Spleen (tissue), 13 donors: ENCODE measurements at regions of chr15 and their contacts with region 1.

Region 1: GRCh38 chr15:78108299-78109084 is 16.1 kb downstream of the SH2D7 start:
- DNase-seq: peak; percentile 96
- H3K4me3 ChIP-seq: no peak overlapping the region
- H3K27ac ChIP-seq: peak overlapping the region in 1 of 8 donors; percentile 30
- H3K4me1 ChIP-seq: peaks cover 13 to 48% (median 35%) of the 10 kb centered on the region in 6 donors
- H3K27me3 ChIP-seq: no peaks in the 10 kb centered on the region
- CTCF ChIP-seq: peak; percentile 94 to 99 (median 97)
- POLR2A ChIP-seq: no peak

Region 2: DNA sequence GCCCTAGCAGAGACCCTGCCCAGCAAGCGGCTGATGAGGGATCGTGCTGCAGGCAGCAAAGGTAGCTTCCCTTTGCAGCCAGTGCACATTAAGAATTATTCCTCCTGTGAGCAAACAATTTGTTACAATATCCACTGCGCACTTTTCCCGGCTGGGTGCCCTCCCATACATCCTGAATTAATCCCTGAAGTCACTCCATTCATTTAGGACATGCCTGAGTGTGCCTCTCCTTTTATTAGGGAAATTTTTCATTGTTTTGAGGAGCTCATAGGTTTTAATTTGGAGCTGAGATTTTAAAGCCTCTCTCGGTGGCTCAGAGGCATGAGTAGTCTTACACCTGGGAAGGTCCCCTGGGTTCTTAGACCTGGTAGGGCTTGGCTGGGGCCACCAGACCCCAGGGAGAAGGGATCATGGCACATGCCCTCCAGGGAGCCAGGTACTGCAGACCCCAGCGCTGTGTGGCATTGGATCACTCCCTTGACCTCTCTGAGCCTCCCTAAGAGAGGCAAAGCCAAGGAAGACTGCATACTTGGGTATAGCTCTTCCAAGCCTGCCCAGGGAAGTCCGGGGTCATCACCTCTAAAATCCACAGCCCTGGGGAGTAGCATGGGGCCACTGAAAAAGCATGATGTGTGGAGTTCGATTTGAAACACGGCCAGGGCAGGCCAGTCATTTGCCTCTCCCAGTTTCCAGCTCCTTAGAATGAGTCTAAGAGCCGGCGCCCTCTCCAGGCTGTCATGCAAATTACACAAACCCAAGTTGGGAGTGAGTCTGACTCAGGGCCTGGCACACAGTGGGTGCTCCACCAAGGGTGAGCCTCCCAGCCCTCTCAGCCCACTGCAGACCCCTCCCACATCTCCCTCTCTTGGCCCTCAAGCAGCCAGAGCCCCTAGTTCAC is 323.8 kb before region 1 on chr15:
- intact Hi-C with region 1: no loop called
- DNase-seq: no peak
- H3K4me3 ChIP-seq: no peak overlapping the region
- H3K27ac ChIP-seq: no peak overlapping the region
- H3K4me1 ChIP-seq: no peaks in the 10 kb centered on the region
- H3K27me3 ChIP-seq: peaks cover 0 to 36% (median 0%) of the 10 kb centered on the region in 7 donors
- CTCF ChIP-seq: peak in 4 of 11 experiments; percentile 17 to 33 (median 25)
- POLR2A ChIP-seq: no peak

Region 3: DNA sequence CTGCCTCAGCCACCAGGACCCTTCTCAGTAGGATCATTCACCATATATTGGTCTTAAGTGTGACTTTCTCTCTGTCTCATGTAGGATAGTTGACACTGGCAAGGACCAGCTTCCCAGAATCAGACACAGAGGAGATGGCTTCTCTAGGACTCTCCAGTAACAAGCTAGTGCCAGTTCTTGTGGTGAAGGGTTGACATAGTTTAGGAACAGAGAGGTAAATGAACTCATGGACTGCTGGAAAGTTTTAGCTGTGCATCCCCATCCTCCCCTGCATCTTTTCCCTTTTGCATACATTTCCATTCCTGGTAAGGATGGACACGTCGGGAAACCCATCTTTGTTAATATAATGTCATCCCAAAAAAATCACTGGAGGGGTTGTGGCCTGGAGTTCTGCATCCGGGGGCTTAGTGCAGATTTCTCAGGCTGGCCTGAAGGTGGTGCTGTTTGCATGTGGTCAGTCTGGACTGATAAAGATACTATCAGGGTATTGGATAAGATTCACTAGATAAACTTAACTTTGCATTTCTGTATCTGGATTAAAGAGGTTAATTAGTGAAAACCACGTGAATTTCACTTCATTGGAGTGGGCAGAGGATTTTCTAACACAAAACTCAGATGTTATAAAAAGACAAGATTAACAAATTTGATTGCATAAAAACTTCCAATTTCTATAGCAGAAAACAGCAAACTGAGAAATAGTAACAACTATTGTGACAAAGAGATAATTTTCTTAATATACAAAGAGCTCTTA is 141.8 kb before region 1 on chr15:
- intact Hi-C with region 1: loop called (anchors 5 kb)
- DNase-seq: no peak
- H3K4me3 ChIP-seq: no peak overlapping the region
- H3K27ac ChIP-seq: no peak overlapping the region
- H3K4me1 ChIP-seq: no peaks in the 10 kb centered on the region
- H3K27me3 ChIP-seq: no peaks in the 10 kb centered on the region
- CTCF ChIP-seq: peak; percentile 50 to 88 (median 82)
- POLR2A ChIP-seq: no peak

Region 4: DNA sequence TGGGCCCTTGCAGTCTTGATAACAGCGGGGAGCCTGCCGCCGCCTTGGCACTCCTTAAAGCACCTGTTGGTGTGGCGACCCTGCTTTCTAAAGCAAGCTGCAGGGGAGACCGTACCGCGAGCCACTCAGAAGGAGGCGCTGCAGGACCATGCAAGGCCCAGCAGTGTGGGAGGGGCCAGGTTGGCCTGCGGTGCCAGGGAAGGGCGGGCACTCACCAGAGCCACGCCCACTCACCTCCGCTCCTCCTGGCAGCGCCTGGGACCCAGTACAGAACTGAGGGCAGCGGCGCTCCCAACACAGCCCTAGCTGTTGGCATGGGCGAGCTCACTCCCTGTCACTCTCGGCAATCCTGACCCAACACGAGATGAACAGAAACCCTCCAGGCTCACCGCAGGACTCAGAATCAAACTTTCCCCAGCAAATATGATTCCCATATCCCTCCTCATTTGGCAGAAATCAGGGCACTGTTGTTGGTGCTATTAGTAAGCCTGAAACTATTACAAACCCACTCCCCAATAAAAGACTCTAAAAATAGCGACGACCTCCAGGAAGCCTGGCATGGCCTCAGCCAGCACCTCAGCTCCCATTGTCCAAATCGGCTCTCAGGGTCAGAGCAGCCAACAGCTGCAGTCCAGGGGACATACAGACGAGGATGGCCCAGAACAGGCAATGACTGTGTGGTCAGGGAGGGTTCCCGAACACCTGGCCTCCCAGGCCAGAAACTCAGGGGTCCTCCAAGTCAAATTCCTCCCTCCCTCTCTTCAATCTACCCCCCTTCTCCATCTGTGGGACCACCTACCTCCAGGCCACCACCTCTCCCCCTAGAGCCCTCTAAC is 108.2 kb before region 1 on chr15:
- intact Hi-C with region 1: loop called (anchors 10 kb)
- DNase-seq: peak; percentile 95
- H3K4me3 ChIP-seq: no peak overlapping the region
- H3K27ac ChIP-seq: peak overlapping the region in 6 of 8 donors; percentile 32 to 69 (median 42)
- H3K4me1 ChIP-seq: peaks cover 0 to 64% (median 30%) of the 10 kb centered on the region in 6 donors
- H3K27me3 ChIP-seq: no peaks in the 10 kb centered on the region
- CTCF ChIP-seq: peak; percentile 53 to 87 (median 73)
- POLR2A ChIP-seq: no peak

Region 5: DNA sequence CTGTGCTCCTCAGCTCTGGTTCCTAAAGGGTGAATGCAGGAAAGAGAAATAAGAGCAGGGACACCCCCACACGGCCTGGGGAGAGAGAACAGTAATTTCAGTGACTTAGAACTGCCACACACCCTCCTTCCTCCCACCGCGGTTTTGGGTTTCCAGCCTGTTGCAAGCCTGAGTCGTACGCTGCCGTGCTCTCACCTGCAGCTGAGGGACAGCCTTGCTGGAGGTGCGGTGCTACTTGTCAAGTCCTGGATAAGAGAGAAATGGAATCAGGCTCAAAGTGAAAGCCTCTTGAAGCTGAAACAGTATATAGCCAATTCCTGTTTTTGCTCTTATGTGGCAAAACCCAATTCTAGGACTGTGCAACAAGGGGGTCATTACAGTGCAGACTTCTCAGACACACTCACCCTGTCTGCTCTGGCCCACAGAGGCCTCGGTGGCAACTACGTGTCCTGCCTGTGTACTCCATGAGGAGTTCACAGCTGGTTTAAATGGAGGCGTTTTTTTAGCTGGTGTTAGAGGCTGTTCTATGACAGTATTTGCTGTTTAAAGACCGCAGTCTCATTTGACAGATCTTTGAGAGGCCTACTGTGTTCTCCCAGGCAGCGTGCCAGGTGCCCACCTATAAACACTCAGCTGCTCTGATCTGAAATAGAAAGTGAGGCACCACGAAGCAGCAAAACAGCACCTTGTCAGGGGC is 73.8 kb before region 1 on chr15:
- intact Hi-C with region 1: loop called (anchors 10 kb)
- DNase-seq: peak; percentile 93
- H3K4me3 ChIP-seq: peak overlapping the region in 4 of 8 donors; percentile 2 to 51 (median 10)
- H3K27ac ChIP-seq: peak overlapping the region; percentile 64 to 97 (median 84)
- H3K4me1 ChIP-seq: peaks cover 65 to 98% (median 83%) of the 10 kb centered on the region in 6 donors
- H3K27me3 ChIP-seq: no peaks in the 10 kb centered on the region
- CTCF ChIP-seq: no peak
- POLR2A ChIP-seq: no peak

Region 6: DNA sequence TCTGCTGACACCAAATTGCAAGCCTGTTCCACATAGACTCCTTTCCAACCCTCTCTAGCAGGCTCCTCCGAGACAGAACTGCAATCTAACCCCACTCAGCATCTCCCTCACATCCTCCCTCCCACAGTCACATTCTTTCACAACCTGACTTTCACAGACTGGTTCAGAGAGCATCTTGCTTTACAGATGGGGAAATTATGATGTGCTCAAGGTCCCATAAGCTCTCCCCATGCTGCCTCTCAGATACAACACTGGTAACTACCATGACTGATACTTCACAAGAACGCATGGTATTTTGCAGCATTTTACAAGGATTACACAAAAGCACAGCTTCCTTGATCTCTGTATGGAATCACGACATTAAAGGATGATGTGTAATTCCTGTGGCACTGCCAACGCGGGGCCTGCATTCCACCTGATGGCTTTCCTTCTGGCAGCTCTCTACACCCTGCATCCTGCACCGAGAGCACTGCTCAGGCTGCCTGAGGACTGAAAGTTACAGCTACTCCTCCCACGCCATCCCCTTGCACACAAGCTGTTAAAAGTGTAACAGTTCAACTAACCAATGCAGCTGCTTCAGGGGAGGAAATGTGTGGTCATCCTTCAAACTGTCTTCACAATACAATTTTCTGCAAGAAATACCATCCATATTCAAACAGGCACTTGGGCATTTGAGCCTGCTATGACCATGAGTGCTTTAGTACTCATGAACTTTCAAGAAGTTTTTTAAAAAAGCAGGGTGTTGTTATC is 58.6 kb before region 1 on chr15:
- intact Hi-C with region 1: no loop called
- DNase-seq: peak; percentile 85
- H3K4me3 ChIP-seq: peak overlapping the region in 1 of 8 donors; percentile 42
- H3K27ac ChIP-seq: peak overlapping the region; percentile 48 to 97 (median 75)
- H3K4me1 ChIP-seq: peaks cover 77 to 100% (median 100%) of the 10 kb centered on the region in 6 donors
- H3K27me3 ChIP-seq: no peaks in the 10 kb centered on the region
- CTCF ChIP-seq: no peak
- POLR2A ChIP-seq: no peak

Region 7: GRCh38 chr15:78193731-78194567 is 85.5 kb after region 1 on chr15:
- intact Hi-C with region 1: loop called (anchors 5 kb)
- DNase-seq: no peak
- H3K4me3 ChIP-seq: no peak overlapping the region
- H3K27ac ChIP-seq: no peak overlapping the region
- H3K4me1 ChIP-seq: peaks cover 0 to 5% (median 0%) of the 10 kb centered on the region in 6 donors
- H3K27me3 ChIP-seq: no peaks in the 10 kb centered on the region
- CTCF ChIP-seq: no peak
- POLR2A ChIP-seq: no peak

Region 8: DNA sequence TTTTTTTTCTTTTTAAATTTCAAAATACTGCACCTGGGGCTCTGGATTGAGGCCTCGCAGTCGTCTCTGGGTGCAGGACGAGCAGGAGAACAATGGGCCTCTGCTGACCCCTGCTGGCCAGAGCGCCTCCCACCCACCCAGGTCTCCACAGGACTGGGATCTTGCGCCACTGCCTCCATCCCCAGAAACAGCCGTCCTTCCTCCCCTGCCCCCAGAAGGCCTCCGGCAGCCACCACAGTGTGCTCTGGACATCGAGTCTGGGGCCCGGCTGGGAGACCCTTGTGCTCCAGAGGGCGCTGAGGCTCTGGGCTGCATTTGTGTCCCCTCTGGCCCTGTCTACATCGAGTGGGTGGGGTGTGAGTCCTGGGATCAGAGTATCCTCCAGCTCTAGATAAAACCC is 132.5 kb after region 1 on chr15:
- intact Hi-C with region 1: loop called (anchors 2 kb)
- DNase-seq: peak; percentile 94
- H3K4me3 ChIP-seq: no peak overlapping the region
- H3K27ac ChIP-seq: no peak overlapping the region
- H3K4me1 ChIP-seq: peaks cover 0 to 15% (median 2%) of the 10 kb centered on the region in 6 donors
- H3K27me3 ChIP-seq: peaks cover 0 to 13% (median 0%) of the 10 kb centered on the region in 7 donors
- CTCF ChIP-seq: peak; percentile 60 to 95 (median 88)
- POLR2A ChIP-seq: no peak

Region 9: DNA sequence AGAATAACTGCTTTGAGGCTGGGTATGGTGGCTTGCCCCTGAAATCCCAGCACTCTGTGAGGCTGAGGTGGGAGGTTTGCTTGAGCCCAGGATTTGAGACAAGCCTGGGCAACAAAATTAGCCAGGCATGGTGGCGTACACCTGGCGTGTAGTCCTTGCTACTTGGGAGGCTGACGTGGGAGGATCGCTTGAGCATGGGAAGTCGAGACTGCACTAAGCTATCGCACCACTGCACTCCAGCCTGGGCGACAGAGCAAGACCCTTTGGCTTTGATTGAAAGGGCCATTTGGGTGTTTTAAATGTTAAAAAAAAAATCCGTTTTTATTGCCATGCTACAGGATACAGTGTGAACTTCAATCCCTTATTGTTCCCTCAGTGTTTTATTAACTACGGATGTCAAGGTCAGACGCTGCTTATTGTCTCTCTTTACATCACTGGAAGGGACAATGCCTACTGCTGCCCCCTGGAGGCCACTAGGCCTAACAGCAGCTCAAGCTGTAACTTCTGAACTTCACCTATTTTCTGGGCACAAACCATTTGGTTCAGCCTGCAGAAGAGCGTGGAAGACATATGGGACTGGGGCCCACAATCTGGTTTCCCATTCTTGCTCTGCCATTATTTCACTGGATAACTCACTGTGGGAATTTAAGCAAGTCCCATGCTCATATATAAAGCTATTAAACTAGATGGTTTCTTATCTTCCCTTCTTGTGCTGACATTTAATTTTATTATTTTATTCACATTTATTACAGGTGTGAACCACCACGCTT is 314.3 kb after region 1 on chr15:
- intact Hi-C with region 1: loop called (anchors 5 kb)
- DNase-seq: peak; percentile 89
- H3K4me3 ChIP-seq: no peak overlapping the region
- H3K27ac ChIP-seq: no peak overlapping the region
- H3K4me1 ChIP-seq: peaks cover 0 to 14% (median 7%) of the 10 kb centered on the region in 6 donors
- H3K27me3 ChIP-seq: peaks cover 0 to 5% (median 0%) of the 10 kb centered on the region in 7 donors
- CTCF ChIP-seq: peak; percentile 65 to 94 (median 88)
- POLR2A ChIP-seq: no peak